AG04449 (cell line): ENCODE measurements at regions of chr11 and their contacts with region 1.

Region 1: GRCh38 chr11:126607374-126607773 is 251.9 kb downstream of the ST3GAL4 start:
- DNase-seq: peak; percentile 10
- H3K4me3 ChIP-seq: no peak overlapping the region
- CTCF ChIP-seq: peak; percentile 96

Region 2: GRCh38 chr11:126480410-126481302 is 126.7 kb before region 1 on chr11:
- CTCF ChIA-PET with region 1: interaction called, 13 read pairs
- POLR2A ChIA-PET with region 1: no interaction called
- DNase-seq: peak; percentile 41
- H3K4me3 ChIP-seq: peak overlapping the region; percentile 24; the same call in 1 of the 2 replicates
- CTCF ChIP-seq: peak; percentile 89

Region 3: DNA sequence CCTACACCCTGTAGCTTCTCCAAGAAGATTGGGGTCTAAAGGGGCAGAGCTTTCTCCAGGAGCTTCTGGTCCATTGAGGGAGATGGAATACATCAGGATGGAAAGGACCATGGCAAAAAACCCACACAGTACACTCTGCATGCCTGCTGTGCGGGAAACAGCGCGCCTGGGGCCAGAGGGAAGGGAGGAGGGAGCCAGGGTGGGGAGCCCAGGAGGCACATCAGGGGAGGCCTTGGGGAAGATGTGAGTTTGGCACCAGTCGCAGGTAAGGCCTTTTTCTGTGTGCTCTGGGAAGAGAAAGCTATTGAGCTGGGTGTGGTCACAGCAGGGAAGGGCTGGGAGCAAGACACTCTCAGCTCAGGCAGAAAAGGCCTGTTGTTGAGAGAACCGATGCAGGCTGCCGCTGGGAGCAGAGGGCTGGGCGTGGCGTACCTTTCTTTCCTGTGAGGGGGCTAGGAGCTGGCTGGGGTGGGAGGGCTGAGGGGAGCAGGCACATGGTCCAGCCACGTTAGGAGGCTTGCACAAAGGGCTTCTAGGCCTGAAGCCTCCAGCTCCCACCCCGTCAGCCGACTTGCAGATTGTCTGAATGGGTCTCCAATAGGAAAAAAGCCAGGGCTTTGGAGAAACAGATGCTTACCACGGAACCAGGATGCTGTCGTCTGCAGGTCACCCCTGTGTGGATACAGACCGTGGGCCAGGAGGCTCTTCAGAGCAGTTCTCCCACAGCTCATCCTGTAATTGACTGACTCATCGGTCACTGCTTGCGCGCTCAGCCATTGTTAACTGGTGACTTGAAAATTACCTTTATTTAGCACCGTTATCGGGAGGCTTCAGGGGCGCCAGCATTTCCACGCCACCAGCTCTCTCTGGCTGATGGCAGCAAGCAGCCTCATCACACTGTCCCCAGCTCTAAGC is 14.6 kb before region 1 on chr11:
- CTCF ChIA-PET with region 1: interaction called, 36 read pairs
- POLR2A ChIA-PET with region 1: no interaction called
- DNase-seq: no peak
- H3K4me3 ChIP-seq: no peak overlapping the region
- CTCF ChIP-seq: no peak

Region 4: DNA sequence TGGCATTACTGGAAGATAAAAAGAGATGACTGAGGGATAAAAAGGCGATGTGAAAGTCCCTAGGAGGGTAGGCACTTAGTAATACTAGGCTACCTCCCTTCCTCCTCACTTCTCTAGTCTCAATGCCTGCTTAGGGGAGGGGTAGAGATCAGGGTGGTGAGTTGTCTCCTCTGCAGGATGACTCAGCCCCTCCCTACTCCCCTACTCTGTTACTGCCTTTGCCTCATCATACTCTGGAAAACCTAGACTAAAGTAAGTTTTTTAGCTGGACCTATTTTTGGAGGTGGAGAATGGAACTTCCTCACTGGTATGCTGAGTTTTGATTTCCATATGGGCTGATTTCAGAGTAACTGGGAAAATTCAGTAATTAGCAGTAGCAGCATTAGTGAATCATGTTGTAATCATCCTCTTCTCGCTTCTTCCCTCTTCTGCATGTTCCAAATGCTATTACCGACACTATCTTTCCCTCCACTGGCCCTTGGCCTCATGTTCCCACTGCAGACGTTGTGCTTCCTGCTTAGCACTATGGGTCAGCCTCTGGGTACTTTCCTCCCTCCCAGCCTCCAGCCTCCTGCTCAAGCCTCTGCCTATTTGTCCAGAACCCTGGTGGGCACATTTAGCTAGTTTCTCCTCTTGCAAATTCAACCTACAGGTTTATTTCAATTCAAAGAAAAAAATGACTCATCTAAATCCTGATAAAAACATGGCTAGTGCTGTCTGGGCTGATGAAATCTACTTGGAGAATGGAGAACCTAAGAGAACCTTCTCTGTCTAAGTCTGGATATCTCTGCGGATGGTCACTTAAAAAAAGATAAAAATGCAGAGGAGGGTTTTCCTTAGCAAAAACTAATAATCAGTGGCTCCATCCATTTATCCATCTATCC is 29.8 kb after region 1 on chr11:
- CTCF ChIA-PET with region 1: interaction called, 19 read pairs
- POLR2A ChIA-PET with region 1: interaction called, 3 read pairs
- DNase-seq: peak; percentile 69
- H3K4me3 ChIP-seq: no peak overlapping the region
- CTCF ChIP-seq: no peak

Region 5: DNA sequence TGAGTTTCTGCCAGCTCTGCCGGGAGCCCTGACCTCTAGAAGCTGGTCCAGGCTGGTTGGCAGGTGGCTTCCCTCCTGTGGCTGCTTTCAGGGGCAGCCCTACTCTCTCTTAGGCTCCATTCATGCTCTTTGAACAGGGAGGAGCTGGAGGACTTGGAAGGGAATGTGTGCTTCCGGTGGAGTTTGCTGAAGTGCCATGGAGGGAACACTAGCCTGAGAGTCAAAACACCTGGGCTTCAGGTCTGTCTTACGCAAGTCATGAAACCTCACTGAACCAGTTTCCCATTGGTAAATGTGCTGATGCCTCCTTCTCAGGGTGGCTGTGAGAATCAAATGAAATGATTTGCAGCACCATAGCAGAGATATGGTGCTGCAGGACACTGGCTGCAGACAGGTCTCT is 168.7 kb after region 1 on chr11:
- CTCF ChIA-PET with region 1: interaction called, 13 read pairs
- POLR2A ChIA-PET with region 1: no interaction called
- DNase-seq: no peak
- H3K4me3 ChIP-seq: no peak overlapping the region
- CTCF ChIP-seq: no peak

Region 6: GRCh38 chr11:126969865-126970479 is 362.6 kb after region 1 on chr11:
- CTCF ChIA-PET with region 1: interaction called, 16 read pairs
- POLR2A ChIA-PET with region 1: no interaction called
- DNase-seq: no peak
- H3K4me3 ChIP-seq: no peak overlapping the region
- CTCF ChIP-seq: peak; percentile 80

Region 7: GRCh38 chr11:127345819-127346459 is 738.6 kb after region 1 on chr11:
- CTCF ChIA-PET with region 1: interaction called, 10 read pairs
- POLR2A ChIA-PET with region 1: no interaction called
- DNase-seq: no peak
- H3K4me3 ChIP-seq: no peak overlapping the region
- CTCF ChIP-seq: peak; percentile 79